MCF 10A (cell line): ENCODE measurements at regions of chr5 and their contacts with region 1.

Region 1: DNA sequence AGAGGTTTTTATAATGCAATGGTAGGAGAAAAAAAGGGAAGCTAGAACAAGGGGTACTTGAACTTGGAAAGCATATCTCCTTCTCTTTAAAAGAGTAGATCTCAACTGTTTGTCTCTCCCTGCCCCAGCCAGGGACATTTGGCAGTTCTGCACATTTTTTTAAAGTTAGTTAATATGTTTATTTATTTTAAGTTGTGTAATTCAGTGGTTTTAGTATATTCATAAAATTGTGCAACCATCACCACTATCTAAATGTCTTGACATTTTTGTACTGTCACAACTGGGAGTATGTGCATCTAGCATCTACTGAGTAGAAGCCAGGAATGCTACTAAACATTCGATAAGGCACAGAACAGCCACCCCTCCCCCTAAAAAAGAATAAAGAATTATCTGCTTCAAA is 103.5 kb upstream of the DPYSL3 start:
- DNase-seq: peak; percentile 84
- H3K4me3 Mint-ChIP-seq: no peak overlapping the region
- H3K27ac Mint-ChIP-seq: no peak overlapping the region
- H3K4me1 Mint-ChIP-seq: peaks cover 23% of the 10 kb centered on the region
- H3K27me3 Mint-ChIP-seq: peaks cover 39% of the 10 kb centered on the region
- CTCF ChIP-seq: no peak

Region 2: GRCh38 chr5:146993876-146994530 is 619.4 kb before region 1 on chr5:
- CTCF ChIA-PET with region 1: no interaction called
- POLR2A ChIA-PET with region 1: no interaction called
- intact Hi-C with region 1: no loop called
- DNase-seq: peak; percentile 33
- H3K4me3 Mint-ChIP-seq: no peak overlapping the region
- H3K27ac Mint-ChIP-seq: no peak overlapping the region
- H3K4me1 Mint-ChIP-seq: no peaks in the 10 kb centered on the region
- H3K27me3 Mint-ChIP-seq: no peaks in the 10 kb centered on the region
- CTCF ChIP-seq: no peak

Region 3: GRCh38 chr5:147055850-147056566 is 557.4 kb before region 1 on chr5:
- CTCF ChIA-PET with region 1: no interaction called
- POLR2A ChIA-PET with region 1: no interaction called
- intact Hi-C with region 1: no loop called
- DNase-seq: no peak
- H3K4me3 Mint-ChIP-seq: no peak overlapping the region
- H3K27ac Mint-ChIP-seq: no peak overlapping the region
- H3K4me1 Mint-ChIP-seq: no peaks in the 10 kb centered on the region
- H3K27me3 Mint-ChIP-seq: no peaks in the 10 kb centered on the region
- CTCF ChIP-seq: no peak

Region 4: GRCh38 chr5:147643142-147643541 is 29.8 kb after region 1 on chr5:
- CTCF ChIA-PET with region 1: interaction called, 3 read pairs
- POLR2A ChIA-PET with region 1: no interaction called
- intact Hi-C with region 1: loop called (anchors 1 kb)
- DNase-seq: peak; percentile 78
- H3K4me3 Mint-ChIP-seq: no peak overlapping the region
- H3K27ac Mint-ChIP-seq: no peak overlapping the region
- H3K4me1 Mint-ChIP-seq: peaks cover 11% of the 10 kb centered on the region
- H3K27me3 Mint-ChIP-seq: peaks cover 11% of the 10 kb centered on the region
- CTCF ChIP-seq: no peak